Calu3 (cell line): ENCODE measurements at regions of chr1 and their contacts with region 1.

Region 1: GRCh38 chr1:241485554-241485992 is 34.0 kb downstream of the FH start:
- DNase-seq: peak; percentile 21
- H3K4me3 Mint-ChIP-seq: no peak overlapping the region
- H3K27ac Mint-ChIP-seq: no peak overlapping the region
- H3K4me1 Mint-ChIP-seq: peaks cover 25% of the 10 kb centered on the region
- H3K27me3 Mint-ChIP-seq: no peaks in the 10 kb centered on the region
- CTCF ChIP-seq: peak; percentile 73

Region 2: GRCh38 chr1:241311056-241311746 is 174.4 kb before region 1 on chr1:
- CTCF ChIA-PET with region 1: interaction called, 8 read pairs
- intact Hi-C with region 1: loop called (anchors 5 kb)
- DNase-seq: no peak
- H3K4me3 Mint-ChIP-seq: no peak overlapping the region
- H3K27ac Mint-ChIP-seq: no peak overlapping the region
- H3K4me1 Mint-ChIP-seq: peaks cover 9% of the 10 kb centered on the region
- H3K27me3 Mint-ChIP-seq: no peaks in the 10 kb centered on the region
- CTCF ChIP-seq: no peak

Region 3: GRCh38 chr1:241422470-241422869 is 63.1 kb before region 1 on chr1:
- CTCF ChIA-PET with region 1: interaction called, 6 read pairs
- intact Hi-C with region 1: loop called (anchors 1 kb)
- DNase-seq: no peak
- H3K4me3 Mint-ChIP-seq: no peak overlapping the region
- H3K27ac Mint-ChIP-seq: no peak overlapping the region
- H3K4me1 Mint-ChIP-seq: peaks cover 7% of the 10 kb centered on the region
- H3K27me3 Mint-ChIP-seq: peaks cover 10% of the 10 kb centered on the region
- CTCF ChIP-seq: no peak

Region 4: GRCh38 chr1:241888232-241888631 is 402.7 kb after region 1 on chr1:
- CTCF ChIA-PET with region 1: no interaction called
- intact Hi-C with region 1: no loop called
- DNase-seq: no peak
- H3K4me3 Mint-ChIP-seq: no peak overlapping the region
- H3K27ac Mint-ChIP-seq: no peak overlapping the region
- H3K4me1 Mint-ChIP-seq: no peaks in the 10 kb centered on the region
- H3K27me3 Mint-ChIP-seq: no peaks in the 10 kb centered on the region
- CTCF ChIP-seq: no peak